Ascending aorta (tissue), 2 donors: ENCODE measurements at regions of chr6 and their contacts with region 1.

Region 1: DNA sequence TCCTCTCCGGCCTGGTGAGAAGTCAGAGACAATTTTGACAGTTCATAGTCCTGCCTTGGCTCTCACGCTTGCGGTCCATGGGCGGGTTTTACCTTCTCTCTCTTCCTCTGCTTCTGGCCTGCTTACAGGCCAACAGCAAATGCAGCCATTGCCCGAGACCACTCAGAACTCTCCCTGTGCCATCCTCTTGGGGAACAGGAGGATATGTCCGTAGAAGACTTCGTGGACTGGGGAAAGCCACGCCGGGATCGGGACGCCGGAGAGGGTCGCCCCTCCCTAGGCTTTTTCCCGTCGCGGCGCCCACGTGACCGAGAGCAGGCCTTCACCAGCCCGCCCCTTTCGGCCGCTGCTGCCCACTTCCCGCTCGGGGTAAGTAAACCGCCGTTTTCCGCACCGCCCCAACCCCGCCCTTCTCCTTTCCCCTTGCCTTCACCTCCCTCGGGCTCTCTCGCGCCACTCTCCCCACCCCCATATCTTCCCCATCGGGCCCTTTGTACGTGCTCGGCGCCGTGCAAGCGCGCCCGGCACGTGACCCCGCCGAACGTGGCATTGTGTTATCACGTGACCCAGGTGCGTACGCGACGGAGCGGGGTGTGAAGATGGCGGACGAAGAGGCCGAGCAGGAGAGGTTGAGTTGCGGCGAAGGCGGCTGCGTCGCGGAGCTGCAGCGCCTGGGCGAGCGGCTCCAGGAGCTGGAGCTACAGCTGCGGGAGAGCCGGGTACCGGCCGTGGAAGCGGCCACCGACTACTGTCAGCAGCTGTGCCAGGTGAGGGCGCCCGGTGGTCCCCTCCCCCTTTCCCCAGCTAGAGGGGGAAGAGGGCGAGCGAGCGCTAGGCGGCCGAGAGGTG is at the start of gene ZNF292:
- DNase-seq: peak; percentile 95 to 98
- H3K4me3 ChIP-seq: peak within 1 kb of the TSS; percentile 80 to 94
- H3K27ac ChIP-seq: peak within 1 kb of the TSS; percentile 93 to 95
- H3K4me1 ChIP-seq: peaks cover 0 to 12% of the 10 kb centered on the region in 2 donors
- H3K27me3 ChIP-seq: no peaks in the 10 kb centered on the region
- CTCF ChIP-seq: no peak
- total RNA-seq, gene ZNF292: 19.1 TPM

Region 2: GRCh38 chr6:85678602-85679444 is 1476.4 kb before region 1 on chr6:
- intact Hi-C with region 1: loop called (anchors 1 kb)
- DNase-seq: peak; percentile 96 to 99
- H3K4me3 ChIP-seq: peak overlapping the region; percentile 90
- H3K27ac ChIP-seq: peak overlapping the region; percentile 91 to 94
- H3K4me1 ChIP-seq: peaks cover 0 to 21% of the 10 kb centered on the region in 2 donors
- H3K27me3 ChIP-seq: no peaks in the 10 kb centered on the region
- CTCF ChIP-seq: no peak

Region 3: DNA sequence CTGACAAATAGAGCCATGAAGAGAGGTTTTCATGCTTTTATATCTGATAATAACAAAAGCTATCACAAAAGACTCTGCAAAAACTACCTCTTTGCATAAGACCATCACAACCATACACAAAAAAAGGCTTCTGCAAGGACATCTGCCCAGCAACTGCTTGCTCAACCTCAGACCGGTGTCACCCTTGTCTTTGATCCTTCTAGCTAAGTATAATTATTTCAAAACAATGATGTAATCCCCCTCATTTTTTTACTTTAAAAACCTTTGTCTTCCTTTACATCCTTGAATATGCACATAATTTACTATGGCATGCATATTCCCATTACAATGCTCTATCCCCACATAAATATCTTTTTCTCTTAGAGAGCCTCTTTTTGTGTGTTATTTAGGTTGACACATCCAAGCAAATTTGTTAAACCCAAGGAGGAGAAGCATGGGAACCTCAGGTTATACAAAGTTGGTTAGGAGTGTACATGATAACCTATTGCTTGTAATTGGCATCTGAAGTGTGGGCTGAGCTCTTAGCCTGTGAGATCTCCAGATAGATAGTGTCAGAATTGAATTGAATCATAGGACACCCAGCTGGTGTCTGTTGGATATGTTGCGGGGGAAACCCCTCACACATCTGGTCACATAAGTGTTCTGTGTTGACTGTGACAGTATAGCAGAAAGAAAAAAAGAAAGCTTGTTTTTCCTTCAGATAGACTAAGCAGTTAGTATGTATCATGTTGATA is 39.6 kb before region 1 on chr6:
- intact Hi-C with region 1: no loop called
- DNase-seq: no peak
- H3K4me3 ChIP-seq: no peak overlapping the region
- H3K27ac ChIP-seq: no peak overlapping the region
- H3K4me1 ChIP-seq: no peaks in the 10 kb centered on the region
- H3K27me3 ChIP-seq: no peaks in the 10 kb centered on the region
- CTCF ChIP-seq: no peak

Region 4: GRCh38 chr6:87322304-87323212 is 167.3 kb after region 1 on chr6 and contains the start of gene SMIM8:
- intact Hi-C with region 1: loop called (anchors 5 kb)
- DNase-seq: peak; percentile 29 to 88
- H3K4me3 ChIP-seq: peak within 1 kb of the TSS; percentile 78 to 99
- H3K27ac ChIP-seq: peak within 1 kb of the TSS; percentile 49 to 57
- H3K4me1 ChIP-seq: no peaks in the 10 kb centered on the region
- H3K27me3 ChIP-seq: no peaks in the 10 kb centered on the region
- CTCF ChIP-seq: peak; percentile 92 to 99 (median 99)
- total RNA-seq, gene SMIM8: 2.9 TPM

Region 5: GRCh38 chr6:87407901-87408720 is 252.9 kb after region 1 on chr6 and contains the start of gene CFAP206:
- intact Hi-C with region 1: loop called (anchors 2 kb)
- DNase-seq: peak; percentile 21 to 88
- H3K4me3 ChIP-seq: peak within 1 kb of the TSS; percentile 84 to 93
- H3K27ac ChIP-seq: peak within 1 kb of the TSS; percentile 75 to 83
- H3K4me1 ChIP-seq: no peaks in the 10 kb centered on the region
- H3K27me3 ChIP-seq: no peaks in the 10 kb centered on the region
- CTCF ChIP-seq: peak in 1 of 3 experiments; percentile 5
- total RNA-seq, gene CFAP206: 1.4 TPM

Region 6: GRCh38 chr6:87472525-87473418 is 317.6 kb after region 1 on chr6 and contains the start of gene SLC35A1:
- intact Hi-C with region 1: loop called (anchors 5 kb)
- DNase-seq: peak; percentile 30 to 92
- H3K4me3 ChIP-seq: peak within 1 kb of the TSS; percentile 85 to 96
- H3K27ac ChIP-seq: peak within 1 kb of the TSS; percentile 82 to 93
- H3K4me1 ChIP-seq: peaks cover 0 to 3% of the 10 kb centered on the region in 2 donors
- H3K27me3 ChIP-seq: no peaks in the 10 kb centered on the region
- CTCF ChIP-seq: peak in 1 of 3 experiments; percentile 15
- total RNA-seq, gene SLC35A1: 7.9 TPM

Region 7: GRCh38 chr6:87589693-87590549 is 434.7 kb after region 1 on chr6 and contains the starts of genes ORC3 and RARS2:
- intact Hi-C with region 1: loop called (anchors 10 kb)
- DNase-seq: peak; percentile 88 to 98
- H3K4me3 ChIP-seq: peak within 1 kb of the TSS; percentile 83 to 94
- H3K27ac ChIP-seq: peak within 1 kb of the TSS; percentile 72 to 85
- H3K4me1 ChIP-seq: peaks cover 3 to 21% of the 10 kb centered on the region in 2 donors
- H3K27me3 ChIP-seq: no peaks in the 10 kb centered on the region
- CTCF ChIP-seq: no peak
- total RNA-seq, gene ORC3: 12.9 TPM
- total RNA-seq, gene RARS2: 1.7 TPM